CD4-positive, alpha-beta T cell (primary cell): ENCODE measurements at regions of chr9 and their contacts with region 1.

Region 1: GRCh38 chr9:110183208-110184145 is 24.5 kb downstream of the C9orf152 start:
- DNase-seq: peak in 13 of 14 experiments; percentile 5 to 70 (median 29)
- ATAC-seq: peak; percentile 58
- H3K4me3 ChIP-seq: no peak overlapping the region
- H3K4me3 Mint-ChIP-seq: no peak overlapping the region
- H3K27ac ChIP-seq: no peak overlapping the region
- H3K27ac Mint-ChIP-seq: no peak overlapping the region
- H3K4me1 ChIP-seq: no peaks in the 10 kb centered on the region
- H3K4me1 Mint-ChIP-seq: peaks cover 6% of the 10 kb centered on the region
- H3K27me3 ChIP-seq: no peaks in the 10 kb centered on the region
- H3K27me3 Mint-ChIP-seq: peaks cover 5% of the 10 kb centered on the region
- CTCF ChIP-seq: peak; percentile 82

Region 2: DNA sequence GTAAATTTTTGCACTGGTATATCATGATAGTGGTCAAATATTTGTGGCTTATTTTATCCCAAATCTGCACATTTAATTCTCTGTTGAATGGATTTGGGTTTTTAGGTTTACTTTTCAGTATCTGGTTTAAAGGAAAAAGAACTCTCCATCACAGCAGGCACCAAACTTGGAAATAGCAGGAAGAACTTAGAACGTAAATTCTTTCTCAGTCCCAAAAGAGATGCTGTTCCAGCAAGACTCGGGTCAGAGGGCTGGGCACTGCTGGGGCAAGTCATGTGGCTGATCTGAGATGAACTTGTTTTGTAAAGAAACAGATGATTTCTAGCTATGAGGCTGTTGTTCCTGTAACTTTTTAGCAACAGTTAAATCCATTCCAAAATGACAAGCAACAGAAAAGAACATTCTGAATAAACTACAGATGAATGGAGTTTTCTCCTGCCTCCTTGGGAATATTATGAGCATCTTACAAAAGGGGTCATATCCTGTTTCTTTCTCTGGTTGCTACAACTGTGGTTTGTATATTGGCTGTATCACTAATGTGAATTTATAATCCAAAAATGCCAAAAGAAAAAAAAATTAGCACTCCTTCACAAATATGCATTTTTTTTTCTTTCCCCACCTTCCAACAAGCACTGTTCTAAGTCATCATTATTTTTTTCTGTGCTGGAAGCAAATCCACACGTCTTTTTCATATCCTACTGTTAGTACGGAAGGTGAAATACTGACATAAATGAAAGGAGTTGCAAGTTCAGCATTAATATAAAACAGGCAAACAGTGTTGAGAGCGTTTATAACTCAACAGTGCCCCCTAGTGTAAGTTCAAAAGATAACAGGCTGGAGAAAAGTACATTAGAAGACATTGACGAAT is 1115.5 kb after region 1 on chr9:
- CTCF ChIA-PET with region 1: no interaction called
- POLR2A ChIA-PET with region 1: no interaction called
- intact Hi-C with region 1: loop called in 1 of 2 experiments (anchors 5 kb)
- DNase-seq: peak in 3 of 14 experiments; percentile 34 to 53 (median 43)
- ATAC-seq: no peak
- H3K4me3 ChIP-seq: no peak overlapping the region
- H3K4me3 Mint-ChIP-seq: no peak overlapping the region
- H3K27ac ChIP-seq: no peak overlapping the region
- H3K27ac Mint-ChIP-seq: no peak overlapping the region
- H3K4me1 ChIP-seq: no peaks in the 10 kb centered on the region
- H3K4me1 Mint-ChIP-seq: no peaks in the 10 kb centered on the region
- H3K27me3 ChIP-seq: no peaks in the 10 kb centered on the region
- H3K27me3 Mint-ChIP-seq: peaks cover 21% of the 10 kb centered on the region
- CTCF ChIP-seq: peak; percentile 78